Heart left ventricle (tissue), 16 donors: ENCODE measurements at regions of chr10 and their contacts with region 1.

Region 1: GRCh38 chr10:103645141-103646054 is 151.9 kb downstream of the NEURL1 start:
- DNase-seq: peak; percentile 58 to 83 (median 72)
- ATAC-seq: peak; percentile 12 to 52 (median 38)
- H3K4me3 ChIP-seq: no peak overlapping the region
- H3K27ac ChIP-seq: peak overlapping the region in 7 of 12 donors; percentile 10 to 72 (median 53)
- H3K4me1 ChIP-seq: peaks cover 5 to 68% (median 50%) of the 10 kb centered on the region in 12 donors
- H3K27me3 ChIP-seq: no peaks in the 10 kb centered on the region
- CTCF ChIP-seq: no peak
- POLR2A ChIP-seq: no peak

Region 2: GRCh38 chr10:103171278-103171677 is 474.1 kb before region 1 on chr10:
- intact Hi-C with region 1: no loop called
- DNase-seq: no peak
- ATAC-seq: no peak
- H3K4me3 ChIP-seq: no peak overlapping the region
- H3K27ac ChIP-seq: peak overlapping the region in 1 of 12 donors; percentile 8
- H3K4me1 ChIP-seq: peaks cover 0 to 10% (median 2%) of the 10 kb centered on the region in 12 donors
- H3K27me3 ChIP-seq: no peaks in the 10 kb centered on the region
- CTCF ChIP-seq: no peak
- POLR2A ChIP-seq: no peak

Region 3: GRCh38 chr10:103605359-103606095 is 39.9 kb before region 1 on chr10:
- intact Hi-C with region 1: loop called in 1 of 10 experiments (anchors 5 kb)
- DNase-seq: peak in 4 of 5 donors; percentile 46 to 60 (median 54)
- ATAC-seq: peak; percentile 24 to 66 (median 53)
- H3K4me3 ChIP-seq: no peak overlapping the region
- H3K27ac ChIP-seq: no peak overlapping the region
- H3K4me1 ChIP-seq: peaks cover 0 to 10% (median 2%) of the 10 kb centered on the region in 12 donors
- H3K27me3 ChIP-seq: no peaks in the 10 kb centered on the region
- CTCF ChIP-seq: peak; percentile 66 to 84 (median 78)
- POLR2A ChIP-seq: no peak

Region 4: GRCh38 chr10:103678178-103678526 is 32.8 kb after region 1 on chr10:
- intact Hi-C with region 1: no loop called
- DNase-seq: peak; percentile 86 to 92 (median 91)
- ATAC-seq: peak; percentile 78 to 92 (median 83)
- H3K4me3 ChIP-seq: peak overlapping the region in 9 of 12 donors; percentile 21 to 49 (median 34)
- H3K27ac ChIP-seq: peak overlapping the region; percentile 11 to 89 (median 78)
- H3K4me1 ChIP-seq: peaks cover 0 to 44% (median 28%) of the 10 kb centered on the region in 12 donors
- H3K27me3 ChIP-seq: no peaks in the 10 kb centered on the region
- CTCF ChIP-seq: no peak
- POLR2A ChIP-seq: no peak